ENCODE measurements at regions of chr1 and their contacts with region 1.

Region 1: DNA sequence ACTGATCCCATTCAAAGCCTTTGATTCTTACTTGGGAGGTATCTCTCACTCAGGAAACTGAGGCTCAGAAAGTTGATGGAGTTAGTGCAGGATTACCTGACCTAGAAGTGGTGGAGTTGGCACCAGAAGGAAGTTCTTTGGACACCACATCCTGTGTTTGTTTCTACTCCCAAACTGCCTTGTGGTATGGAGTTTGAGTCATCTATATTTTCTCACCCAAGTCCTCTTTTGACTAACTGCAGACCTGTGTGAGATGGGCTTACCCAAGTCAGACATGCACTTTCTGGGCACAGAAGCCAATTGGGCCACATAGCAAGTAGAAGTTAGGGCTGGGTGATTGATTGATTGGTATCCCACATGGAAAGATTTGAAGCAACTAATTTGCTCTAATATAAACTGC is 36.1 kb downstream of the FGGY start:
- DNase-seq: peak; percentile 80
- H3K4me3 ChIP-seq: no peak overlapping the region
- H3K27ac ChIP-seq: peak overlapping the region; percentile 67
- H3K4me1 ChIP-seq: peaks cover 38% of the 10 kb centered on the region
- H3K27me3 ChIP-seq: no peaks in the 10 kb centered on the region
- CTCF ChIP-seq: no peak

Region 2: GRCh38 chr1:59404796-59405195 is 71.8 kb after region 1 on chr1:
- CTCF ChIA-PET with region 1: no interaction called
- dilution Hi-C with region 1: loop called (anchors 5 kb)
- in situ Hi-C with region 1: no loop called
- intact Hi-C with region 1: no loop called
- DNase-seq: no peak
- H3K4me3 ChIP-seq: no peak overlapping the region
- H3K27ac ChIP-seq: no peak overlapping the region
- H3K4me1 ChIP-seq: peaks cover 8% of the 10 kb centered on the region
- H3K27me3 ChIP-seq: no peaks in the 10 kb centered on the region
- CTCF ChIP-seq: no peak

Region 3: GRCh38 chr1:59455206-59455605 is 122.2 kb after region 1 on chr1:
- CTCF ChIA-PET with region 1: no interaction called
- dilution Hi-C with region 1: no loop called
- in situ Hi-C with region 1: no loop called
- intact Hi-C with region 1: no loop called
- DNase-seq: peak; percentile 58
- H3K4me3 ChIP-seq: no peak overlapping the region
- H3K27ac ChIP-seq: no peak overlapping the region
- H3K4me1 ChIP-seq: peaks cover 17% of the 10 kb centered on the region
- H3K27me3 ChIP-seq: no peaks in the 10 kb centered on the region
- CTCF ChIP-seq: no peak

Region 4: DNA sequence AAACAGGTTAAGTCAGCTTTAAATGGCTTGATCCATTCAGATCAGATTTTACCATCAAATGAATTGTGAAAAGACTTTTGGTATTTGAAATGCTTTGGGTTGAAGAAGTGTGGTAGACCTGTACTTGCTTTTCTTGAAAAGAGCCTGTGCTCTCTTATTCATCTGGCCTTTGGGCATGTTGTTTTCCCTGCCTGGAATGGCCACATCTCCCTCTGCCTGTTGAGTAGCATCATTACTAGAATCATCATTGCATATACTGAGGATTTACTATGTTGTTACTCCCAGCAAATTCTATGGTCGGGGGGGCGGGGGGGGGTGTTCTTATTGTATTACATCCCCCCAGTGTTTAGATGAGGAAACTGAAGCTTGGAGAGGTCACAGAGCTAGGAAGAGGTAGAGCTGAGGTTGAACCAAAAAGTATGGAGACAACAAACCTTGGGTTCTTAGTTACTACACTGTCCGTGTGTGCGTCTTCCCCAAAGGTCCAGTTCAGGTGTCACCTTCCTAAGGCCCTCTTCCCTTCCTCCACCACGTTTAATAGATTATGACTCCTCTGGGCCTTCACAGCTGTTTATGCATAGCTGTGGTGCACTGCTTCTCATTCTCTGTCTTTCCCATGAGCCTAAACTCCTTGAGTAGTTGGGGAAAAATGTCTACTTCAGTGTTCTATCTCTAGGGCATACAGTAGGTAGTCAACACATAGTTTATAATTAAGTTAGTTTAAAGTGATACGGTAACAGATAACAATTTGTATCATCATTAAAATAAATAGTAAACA is 235.4 kb after region 1 on chr1:
- CTCF ChIA-PET with region 1: interaction called, 7 read pairs
- dilution Hi-C with region 1: no loop called
- in situ Hi-C with region 1: no loop called
- intact Hi-C with region 1: loop called (anchors 5 kb)
- DNase-seq: peak; percentile 16
- H3K4me3 ChIP-seq: no peak overlapping the region
- H3K27ac ChIP-seq: no peak overlapping the region
- H3K4me1 ChIP-seq: peaks cover 3% of the 10 kb centered on the region
- H3K27me3 ChIP-seq: no peaks in the 10 kb centered on the region
- CTCF ChIP-seq: peak in 1 of 2 donors; percentile 58

Measured in mammary epithelial cell (primary cell).